ENCODE measurements at regions of chr2 and their contacts with region 1.

Region 1: GRCh38 chr2:85538486-85539360 is at the start of gene MAT2A:
- DNase-seq: peak; percentile 95 to 98 (median 98)
- ATAC-seq: peak; percentile 93 to 95
- H3K4me3 ChIP-seq: peak within 1 kb of the TSS; percentile 67
- H3K27ac ChIP-seq: peak within 1 kb of the TSS; percentile 99
- H3K4me1 ChIP-seq: peaks cover 2% of the 10 kb centered on the region
- H3K27me3 ChIP-seq: no peaks in the 10 kb centered on the region
- total RNA-seq, gene MAT2A: 123 to 227 (median 144) TPM

Region 2: GRCh38 chr2:85437488-85438284 is 101.0 kb before region 1 on chr2:
- intact Hi-C with region 1: loop called in 2 of 4 experiments (anchors 5 kb)
- DNase-seq: peak; percentile 91 to 97 (median 96)
- ATAC-seq: peak; percentile 88 to 89
- H3K4me3 ChIP-seq: peak overlapping the region; percentile 66
- H3K27ac ChIP-seq: peak overlapping the region; percentile 99
- H3K4me1 ChIP-seq: peaks cover 15% of the 10 kb centered on the region
- H3K27me3 ChIP-seq: no peaks in the 10 kb centered on the region

Region 3: DNA sequence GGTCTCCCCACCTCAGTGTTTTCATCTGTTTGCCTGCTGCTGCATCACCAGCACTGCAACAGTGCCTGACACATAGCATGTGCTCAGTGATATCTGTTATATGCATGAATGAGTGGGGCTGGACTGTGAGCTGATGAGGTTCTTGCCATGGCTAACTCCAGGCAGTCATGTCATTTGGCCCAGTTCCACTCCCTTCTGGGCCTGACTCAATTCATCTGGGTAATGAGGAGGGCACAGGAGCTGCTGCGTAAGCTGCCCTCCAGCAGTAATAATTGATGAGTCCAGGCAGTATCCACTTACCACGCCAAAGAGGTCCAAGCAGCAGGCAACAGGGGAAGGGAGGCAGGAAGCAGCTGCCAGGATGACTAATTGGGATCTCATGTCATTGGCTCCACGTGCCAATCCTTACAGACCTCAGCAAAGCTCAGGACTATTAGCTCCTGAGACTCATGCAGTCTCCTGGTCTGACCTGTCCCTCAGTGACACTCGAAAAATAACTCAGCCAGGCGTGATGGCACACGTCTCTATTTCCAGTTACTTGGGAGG is 33.9 kb before region 1 on chr2:
- intact Hi-C with region 1: loop called in 1 of 4 experiments (anchors 5 kb)
- DNase-seq: peak in 1 of 3 donors; percentile 51
- ATAC-seq: peak; percentile 66 to 88
- H3K4me3 ChIP-seq: no peak overlapping the region
- H3K27ac ChIP-seq: peak overlapping the region; percentile 80
- H3K4me1 ChIP-seq: peaks cover 8% of the 10 kb centered on the region
- H3K27me3 ChIP-seq: no peaks in the 10 kb centered on the region

Region 4: GRCh38 chr2:85785027-85785822 is 246.5 kb after region 1 on chr2:
- intact Hi-C with region 1: no loop called
- DNase-seq: peak; percentile 73 to 92 (median 91)
- ATAC-seq: peak; percentile 50 to 68
- H3K4me3 ChIP-seq: no peak overlapping the region
- H3K27ac ChIP-seq: peak overlapping the region; percentile 87
- H3K4me1 ChIP-seq: peaks cover 14% of the 10 kb centered on the region
- H3K27me3 ChIP-seq: no peaks in the 10 kb centered on the region

Measured in right cardiac atrium (tissue), 5 donors.